ENCODE measurements at regions of chr2 and their contacts with region 1.

Region 1: GRCh38 chr2:178833382-178833781 is 26.2 kb upstream of the TTN start:
- DNase-seq: no peak

Region 2: DNA sequence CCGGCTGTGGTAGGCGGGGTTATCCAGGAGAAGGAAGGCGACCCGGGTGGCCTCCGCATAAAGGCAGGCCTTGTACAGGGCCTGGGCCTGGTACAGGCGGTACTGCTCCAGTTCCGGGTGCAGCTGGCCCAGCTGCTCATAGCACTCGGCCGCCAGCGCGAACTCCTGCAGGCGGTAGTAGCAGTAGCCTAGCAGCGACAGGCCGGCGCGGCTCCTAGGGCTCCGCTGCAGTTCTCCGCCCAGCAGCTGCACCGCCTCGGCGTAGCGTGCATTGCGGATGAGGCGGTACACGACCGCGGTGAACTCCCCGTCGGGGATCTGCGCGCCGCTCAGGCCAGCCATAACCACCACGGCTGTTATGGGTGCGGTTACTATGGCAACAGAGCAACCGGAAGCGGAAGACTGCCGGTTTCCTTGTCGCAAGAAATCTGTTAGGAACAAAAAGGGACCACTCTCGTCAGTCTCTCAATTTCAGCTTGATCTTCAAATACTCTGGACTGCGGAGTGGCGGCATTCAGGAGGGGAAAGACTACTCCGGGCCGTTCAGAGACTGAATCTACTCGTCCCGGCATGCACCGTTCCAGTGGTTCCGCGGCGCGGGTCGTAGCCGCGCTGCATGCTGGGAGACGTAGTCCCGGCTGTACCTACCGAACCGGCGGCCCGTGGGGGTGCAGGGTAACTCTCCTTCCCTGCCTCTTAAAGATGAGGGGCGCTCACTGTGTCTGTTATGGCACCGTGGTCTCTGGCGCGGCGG is 1280.8 kb before region 1 on chr2:
- intact Hi-C with region 1: no loop called
- DNase-seq: peak; percentile 95

Region 3: DNA sequence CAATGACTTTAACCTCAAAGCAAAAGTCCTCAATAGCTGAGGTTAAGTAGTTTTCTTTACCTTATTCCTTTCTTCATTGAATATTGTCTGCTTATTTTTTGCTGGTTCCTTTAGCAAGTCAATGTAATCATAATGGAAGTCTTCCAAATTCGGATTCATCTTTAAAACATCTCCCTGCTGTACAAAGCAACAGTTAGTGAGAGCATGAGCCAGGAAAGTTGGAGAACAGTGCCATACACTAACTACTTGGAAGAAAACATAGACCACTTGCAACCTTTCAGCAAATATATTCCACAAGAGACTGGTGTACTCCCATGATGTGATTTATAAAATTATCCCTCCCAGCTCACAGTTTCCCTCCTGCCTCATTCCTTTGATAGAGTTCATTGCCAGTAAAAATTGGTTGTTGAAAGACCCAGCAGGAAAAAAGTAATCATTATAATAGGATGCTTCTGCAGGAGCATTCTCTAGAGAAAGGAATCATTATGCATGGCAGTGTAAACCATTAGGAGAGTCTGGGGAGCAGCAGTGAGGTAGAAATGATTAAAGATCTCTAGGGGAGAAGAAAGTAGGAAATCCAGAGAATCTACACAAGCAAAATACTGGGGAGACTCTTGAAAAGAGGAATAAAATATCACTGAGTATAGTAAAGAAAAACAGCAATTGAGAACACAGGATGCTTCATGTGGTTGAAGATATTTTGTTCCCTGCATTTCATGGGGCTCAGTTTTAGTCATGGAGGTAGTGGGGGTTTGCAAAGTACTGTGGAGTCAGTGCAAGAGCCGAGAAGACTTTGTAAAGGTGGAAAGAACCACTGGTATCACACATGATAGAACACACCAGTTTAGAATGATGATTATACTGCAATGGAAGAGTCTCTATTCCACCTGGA is 12.4 kb after region 1 on chr2:
- intact Hi-C with region 1: loop called in 1 of 2 experiments (anchors 1 kb)
- DNase-seq: no peak